Activated CD4-positive, alpha-beta T cell treated with anti-CD3 and anti-CD28 coated beads, Interleukin-2, amount 10 ng/mL, durations not matched to agents 24 days and 14 days (primary cell): ENCODE measurements at regions of chr11 and their contacts with region 1.

Region 1: GRCh38 chr11:17298302-17298701 is 21.8 kb downstream of the NUCB2 start:
- DNase-seq: peak; percentile 70
- H3K4me3 Mint-ChIP-seq: peak overlapping the region; percentile 5
- H3K27ac Mint-ChIP-seq: no peak overlapping the region
- H3K4me1 Mint-ChIP-seq: peaks cover 27% of the 10 kb centered on the region
- H3K27me3 Mint-ChIP-seq: no peaks in the 10 kb centered on the region

Region 2: DNA sequence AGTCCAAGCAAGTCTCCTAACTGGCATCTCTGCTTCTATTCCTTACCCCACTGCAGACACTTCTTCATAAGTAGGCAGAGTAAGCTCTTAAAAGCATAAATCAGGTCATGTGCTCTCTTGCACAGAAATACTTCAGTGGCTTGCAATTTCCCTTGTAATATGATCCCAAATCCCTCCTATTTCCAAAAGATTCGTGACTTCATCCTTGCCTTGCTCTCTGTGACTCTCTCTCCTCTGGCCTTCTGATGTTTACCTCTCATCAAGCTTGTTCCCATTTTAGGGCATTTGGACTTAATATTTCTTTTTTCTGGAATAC is 15.9 kb after region 1 on chr11:
- intact Hi-C with region 1: loop called (anchors 2 kb)
- DNase-seq: peak; percentile 41
- H3K4me3 Mint-ChIP-seq: no peak overlapping the region
- H3K27ac Mint-ChIP-seq: no peak overlapping the region
- H3K4me1 Mint-ChIP-seq: no peaks in the 10 kb centered on the region
- H3K27me3 Mint-ChIP-seq: no peaks in the 10 kb centered on the region

Region 3: GRCh38 chr11:17519061-17519885 is 221.0 kb after region 1 on chr11:
- intact Hi-C with region 1: no loop called
- DNase-seq: no peak
- H3K4me3 Mint-ChIP-seq: no peak overlapping the region
- H3K27ac Mint-ChIP-seq: no peak overlapping the region
- H3K4me1 Mint-ChIP-seq: no peaks in the 10 kb centered on the region
- H3K27me3 Mint-ChIP-seq: peaks cover 7% of the 10 kb centered on the region